ENCODE measurements at regions of chr6 and their contacts with region 1.

Region 1: GRCh38 chr6:53171605-53172446 is 23.2 kb upstream of the GCM1 start:
- DNase-seq: peak; percentile 87 to 89
- H3K4me3 ChIP-seq: no peak overlapping the region
- H3K27ac ChIP-seq: no peak overlapping the region
- H3K4me1 ChIP-seq: no peaks in the 10 kb centered on the region
- H3K27me3 ChIP-seq: no peaks in the 10 kb centered on the region
- CTCF ChIP-seq: peak; percentile 100
- POLR2A ChIP-seq: no peak

Region 2: DNA sequence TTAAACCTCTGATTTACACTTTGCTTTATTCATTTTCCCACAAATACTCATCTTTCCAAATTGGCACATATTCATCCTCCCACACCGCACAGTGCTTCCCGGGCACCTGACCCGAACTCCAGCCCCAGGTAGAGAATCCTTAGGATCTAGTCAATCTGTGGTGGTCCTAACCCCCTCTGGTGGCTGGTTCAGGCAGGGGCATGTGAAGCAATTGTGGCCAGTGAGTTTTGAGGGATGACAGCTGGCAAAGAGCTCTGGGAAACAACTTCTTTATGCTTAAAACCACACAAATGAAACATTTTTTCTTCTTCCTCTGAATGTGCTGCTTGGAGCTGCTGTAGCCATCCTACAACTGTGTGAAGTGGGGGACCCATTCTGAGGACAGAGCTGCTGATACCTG is 122.3 kb after region 1 on chr6:
- intact Hi-C with region 1: loop called (anchors 10 kb)
- DNase-seq: no peak
- H3K4me3 ChIP-seq: no peak overlapping the region
- H3K27ac ChIP-seq: no peak overlapping the region
- H3K4me1 ChIP-seq: no peaks in the 10 kb centered on the region
- H3K27me3 ChIP-seq: no peaks in the 10 kb centered on the region
- CTCF ChIP-seq: peak in 4 of 6 experiments; percentile 17 to 32 (median 26)
- POLR2A ChIP-seq: no peak

Region 3: GRCh38 chr6:53410508-53411258 is 238.9 kb after region 1 on chr6:
- intact Hi-C with region 1: loop called (anchors 5 kb)
- DNase-seq: peak; percentile 61 to 72
- H3K4me3 ChIP-seq: no peak overlapping the region
- H3K27ac ChIP-seq: no peak overlapping the region
- H3K4me1 ChIP-seq: no peaks in the 10 kb centered on the region
- H3K27me3 ChIP-seq: no peaks in the 10 kb centered on the region
- CTCF ChIP-seq: peak; percentile 36 to 86 (median 78)
- POLR2A ChIP-seq: no peak

Region 4: GRCh38 chr6:53484476-53485280 is 312.9 kb after region 1 on chr6:
- intact Hi-C with region 1: loop called (anchors 5 kb)
- DNase-seq: peak; percentile 68 to 75
- H3K4me3 ChIP-seq: no peak overlapping the region
- H3K27ac ChIP-seq: no peak overlapping the region
- H3K4me1 ChIP-seq: no peaks in the 10 kb centered on the region
- H3K27me3 ChIP-seq: peaks cover 3% of the 10 kb centered on the region
- CTCF ChIP-seq: peak; percentile 79 to 96 (median 93)
- POLR2A ChIP-seq: no peak